ENCODE measurements at regions of chr10 and their contacts with region 1.

Region 1: DNA sequence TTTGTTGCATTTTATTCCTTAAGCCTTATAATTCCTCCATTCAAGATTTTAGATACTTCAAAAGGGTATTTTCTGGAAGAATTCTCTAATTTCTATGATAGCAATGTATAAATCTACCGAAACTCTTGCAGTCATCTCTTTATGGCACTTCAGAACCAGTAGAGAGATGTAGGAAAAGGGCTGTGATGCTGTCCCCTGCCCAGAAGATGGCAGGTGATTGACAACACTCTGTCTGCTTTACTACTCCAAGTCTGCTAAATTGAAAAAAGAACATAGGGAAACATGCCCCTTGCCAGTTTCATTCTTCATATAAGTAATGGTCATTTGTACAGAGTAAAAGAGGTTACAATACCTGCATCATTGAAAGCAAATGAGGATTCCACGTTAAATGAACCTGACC is 5.1 kb downstream of the TCTN3 start:
- DNase-seq: no peak
- ATAC-seq: no peak
- H3K4me3 Mint-ChIP-seq: no peak overlapping the region
- H3K27ac Mint-ChIP-seq: no peak overlapping the region
- H3K4me1 Mint-ChIP-seq: peaks cover 47% of the 10 kb centered on the region
- H3K27me3 Mint-ChIP-seq: no peaks in the 10 kb centered on the region
- CTCF ChIP-seq: no peak

Region 2: DNA sequence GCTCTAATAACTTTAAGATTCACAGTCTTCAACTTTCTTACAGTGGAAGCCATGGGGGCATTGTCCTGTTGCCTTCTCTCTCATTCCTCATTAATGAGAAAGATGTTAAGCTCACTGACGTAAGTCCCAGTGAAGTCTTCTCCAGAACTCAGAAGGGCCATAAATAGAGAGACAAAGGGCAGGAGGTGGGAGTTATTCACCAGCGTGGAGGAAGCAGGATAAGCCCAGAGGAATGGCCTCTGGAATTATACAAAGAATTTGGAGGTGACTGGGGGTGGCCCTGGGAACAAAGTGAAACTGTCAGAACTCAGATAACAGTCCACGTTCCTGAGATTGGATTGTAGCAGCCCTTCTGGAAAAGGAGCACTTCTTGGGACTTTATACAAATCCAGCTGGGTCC is 179.9 kb before region 1 on chr10:
- CTCF ChIA-PET with region 1: no interaction called
- POLR2A ChIA-PET with region 1: no interaction called
- intact Hi-C with region 1: loop called (anchors 5 kb)
- DNase-seq: no peak
- ATAC-seq: no peak
- H3K4me3 Mint-ChIP-seq: no peak overlapping the region
- H3K27ac Mint-ChIP-seq: no peak overlapping the region
- H3K4me1 Mint-ChIP-seq: no peaks in the 10 kb centered on the region
- H3K27me3 Mint-ChIP-seq: peaks cover 12% of the 10 kb centered on the region
- CTCF ChIP-seq: no peak

Region 3: GRCh38 chr10:95628786-95629185 is 59.9 kb before region 1 on chr10:
- CTCF ChIA-PET with region 1: no interaction called
- POLR2A ChIA-PET with region 1: no interaction called
- intact Hi-C with region 1: no loop called
- DNase-seq: no peak
- ATAC-seq: no peak
- H3K4me3 Mint-ChIP-seq: no peak overlapping the region
- H3K27ac Mint-ChIP-seq: no peak overlapping the region
- H3K4me1 Mint-ChIP-seq: no peaks in the 10 kb centered on the region
- H3K27me3 Mint-ChIP-seq: no peaks in the 10 kb centered on the region
- CTCF ChIP-seq: no peak

Measured in activated B cell treated with CpG ODN at 0.5 μM for 24 hours (primary cell).